ENCODE measurements at regions of chr7 and their contacts with region 1.

Region 1: GRCh38 chr7:21011118-21011517 is 224.4 kb upstream of the SP8 start:
- DNase-seq: no peak
- ATAC-seq: no peak
- H3K4me3 ChIP-seq: no peak overlapping the region
- H3K27ac ChIP-seq: no peak overlapping the region
- H3K4me1 ChIP-seq: no peaks in the 10 kb centered on the region
- H3K27me3 ChIP-seq: no peaks in the 10 kb centered on the region
- CTCF ChIP-seq: no peak
- EP300 ChIP-seq: no peak
- POLR2A ChIP-seq: no peak
- RAD21 ChIP-seq: no peak

Region 2: GRCh38 chr7:20998309-20998708 is 12.8 kb before region 1 on chr7:
- CTCF ChIA-PET with region 1: no interaction called
- POLR2A ChIA-PET with region 1: no interaction called
- RAD21 ChIA-PET with region 1: no interaction called
- SMC1A ChIA-PET with region 1: no interaction called
- in situ Hi-C with region 1: no loop called
- intact Hi-C with region 1: loop called (anchors 2 kb)
- DNase-seq: no peak
- ATAC-seq: no peak
- H3K4me3 ChIP-seq: no peak overlapping the region
- H3K27ac ChIP-seq: no peak overlapping the region
- H3K4me1 ChIP-seq: no peaks in the 10 kb centered on the region
- H3K27me3 ChIP-seq: no peaks in the 10 kb centered on the region
- CTCF ChIP-seq: no peak
- EP300 ChIP-seq: no peak
- POLR2A ChIP-seq: no peak
- RAD21 ChIP-seq: no peak